ENCODE measurements at regions of chr3 and their contacts with region 1.

Region 1: DNA sequence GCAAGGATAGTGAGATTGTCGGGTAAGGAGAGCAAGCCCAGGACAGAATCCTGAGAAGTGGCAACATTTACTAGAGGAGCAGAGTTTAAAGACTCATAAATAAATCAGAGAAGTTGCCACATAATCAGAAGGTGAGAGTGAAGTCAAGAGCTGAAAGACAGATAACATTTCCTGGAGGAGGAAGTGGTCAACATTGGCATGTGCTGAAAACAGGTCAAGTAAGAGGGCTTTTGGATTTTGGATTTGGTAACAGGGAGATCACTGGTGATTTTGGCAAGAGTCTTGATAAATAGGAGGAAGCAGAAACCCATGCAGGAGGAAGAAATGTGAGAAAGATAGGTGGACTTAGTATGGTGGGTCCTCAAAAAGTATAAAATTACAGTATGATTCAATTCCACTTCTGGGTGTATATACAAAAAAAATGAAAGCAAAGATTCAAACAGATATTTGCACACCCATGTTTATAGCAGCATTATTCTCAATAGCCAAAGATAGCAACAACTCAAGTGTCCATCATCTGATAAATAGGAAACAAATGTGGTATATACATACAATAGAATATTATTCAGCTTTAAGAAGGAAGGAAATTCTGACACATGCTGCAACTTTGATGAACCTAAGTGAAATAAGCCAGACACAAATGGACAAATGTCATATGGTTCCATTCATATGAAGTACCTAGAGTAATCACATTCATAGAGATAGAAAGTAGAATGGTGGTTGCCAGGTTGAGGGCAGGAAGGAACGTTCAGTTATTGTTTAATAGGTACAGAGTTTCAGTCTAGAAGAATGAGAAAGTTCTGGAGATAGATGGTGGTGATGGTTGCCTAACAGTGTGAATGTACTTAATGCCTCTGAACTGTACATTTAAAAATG is 27.3 kb upstream of the MBNL1 start:
- DNase-seq: no peak
- ATAC-seq: peak; percentile 12
- H3K4me3 Mint-ChIP-seq: peak overlapping the region; percentile 97
- H3K27ac Mint-ChIP-seq: peak overlapping the region; percentile 88
- H3K4me1 Mint-ChIP-seq: peaks cover 51% of the 10 kb centered on the region
- H3K27me3 Mint-ChIP-seq: no peaks in the 10 kb centered on the region

Region 2: DNA sequence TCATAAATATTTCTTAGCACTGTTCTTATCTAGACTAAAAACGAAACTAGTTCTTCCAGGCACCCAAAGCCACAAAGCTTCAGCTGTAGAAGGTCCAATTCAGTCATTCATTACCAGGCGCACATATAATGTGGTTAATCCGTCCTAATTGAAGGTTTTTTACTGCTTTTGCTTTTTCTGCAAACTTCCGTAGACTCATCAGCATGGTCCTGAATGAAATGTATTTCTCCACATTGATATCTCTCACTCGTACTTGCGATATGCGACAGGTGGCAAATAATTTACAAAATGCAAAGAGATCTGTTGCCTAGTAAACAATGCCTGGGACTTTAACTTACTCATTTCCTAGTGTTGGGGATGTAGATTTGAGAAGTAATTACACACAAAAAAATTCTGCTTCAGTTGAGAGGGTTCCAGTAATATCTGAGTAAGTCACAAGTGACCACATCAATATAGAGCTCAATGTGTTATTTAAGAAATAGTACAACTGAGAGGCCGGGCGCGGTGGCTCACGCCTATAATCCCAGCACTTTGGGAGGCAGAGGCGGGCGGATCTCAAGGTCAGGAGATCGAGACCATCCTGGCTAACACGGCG is 47.6 kb before region 1 on chr3:
- POLR2A ChIA-PET with region 1: interaction called, 126 read pairs
- DNase-seq: no peak
- ATAC-seq: peak; percentile 64
- H3K4me3 Mint-ChIP-seq: peak overlapping the region; percentile 86
- H3K27ac Mint-ChIP-seq: peak overlapping the region; percentile 87
- H3K4me1 Mint-ChIP-seq: peaks cover 67% of the 10 kb centered on the region
- H3K27me3 Mint-ChIP-seq: no peaks in the 10 kb centered on the region

Region 3: DNA sequence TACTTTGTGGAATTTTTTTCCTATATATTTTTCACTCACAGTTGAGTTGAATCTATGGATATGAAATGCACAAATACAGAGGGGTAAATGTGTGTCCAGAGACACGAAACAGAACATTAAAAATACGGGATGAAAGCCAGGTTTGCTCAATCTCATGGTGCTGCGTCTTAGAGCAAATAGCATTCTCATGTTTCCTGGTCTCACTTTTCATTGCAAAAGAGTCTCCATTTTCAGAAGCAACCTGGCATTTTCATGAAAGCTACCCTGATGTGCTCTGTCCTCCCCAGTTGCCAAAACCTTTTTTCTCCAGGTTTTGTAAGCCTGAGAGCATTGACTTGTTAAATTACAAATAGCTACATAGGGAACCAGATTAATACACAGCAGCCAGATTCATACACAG is 22.2 kb before region 1 on chr3:
- POLR2A ChIA-PET with region 1: interaction called, 16 read pairs
- DNase-seq: no peak
- ATAC-seq: no peak
- H3K4me3 Mint-ChIP-seq: peak overlapping the region; percentile 83
- H3K27ac Mint-ChIP-seq: peak overlapping the region; percentile 15
- H3K4me1 Mint-ChIP-seq: peaks cover 55% of the 10 kb centered on the region
- H3K27me3 Mint-ChIP-seq: no peaks in the 10 kb centered on the region

Region 4: DNA sequence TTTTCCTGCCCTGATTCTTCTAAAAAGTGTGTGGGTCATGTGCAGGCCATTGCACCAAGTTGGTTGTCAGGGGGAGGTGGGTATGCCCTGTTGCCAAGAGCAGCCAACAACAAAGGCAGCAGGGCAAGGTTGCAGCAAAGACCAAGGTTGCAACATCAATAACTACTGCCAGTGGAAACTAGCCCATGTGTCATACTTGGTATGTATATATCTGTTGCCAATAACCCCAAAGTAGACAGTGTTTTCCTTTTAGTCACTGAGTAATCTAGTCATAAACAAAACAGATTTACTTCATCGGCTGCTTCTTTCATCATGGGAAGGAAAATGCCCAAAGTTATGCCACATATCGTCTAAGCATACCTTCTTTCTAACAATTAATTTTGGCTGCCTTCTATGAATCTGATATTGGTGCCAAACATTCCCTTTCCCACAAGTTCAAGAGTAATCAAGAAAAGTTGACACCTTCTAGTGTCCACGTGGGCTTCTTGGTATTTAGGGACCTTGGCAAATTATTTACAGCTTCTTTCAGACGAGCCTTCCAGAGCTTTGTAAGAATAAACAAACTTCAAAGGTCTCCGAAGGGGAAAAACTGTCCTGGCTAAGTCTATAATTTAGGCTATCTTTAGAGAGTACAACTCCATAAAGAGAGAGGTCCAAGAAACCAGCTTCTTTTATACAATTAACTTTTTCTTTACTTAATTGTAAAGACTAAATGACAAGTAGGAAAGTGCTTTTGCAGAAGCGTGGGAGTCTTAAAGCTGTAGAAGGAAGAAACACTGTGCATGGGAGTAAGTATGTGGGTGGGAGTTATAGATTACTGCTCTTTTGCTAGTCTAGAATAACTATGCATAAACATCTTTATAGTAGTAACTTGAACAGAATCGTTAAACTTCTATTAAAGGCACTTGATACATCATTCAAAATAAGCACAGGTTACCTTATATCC is 17.3 kb after region 1 on chr3:
- POLR2A ChIA-PET with region 1: interaction called, 46 read pairs
- DNase-seq: no peak
- ATAC-seq: peak; percentile 50
- H3K4me3 Mint-ChIP-seq: peak overlapping the region; percentile 79
- H3K27ac Mint-ChIP-seq: peak overlapping the region; percentile 91
- H3K4me1 Mint-ChIP-seq: peaks cover 74% of the 10 kb centered on the region
- H3K27me3 Mint-ChIP-seq: no peaks in the 10 kb centered on the region

Region 5: DNA sequence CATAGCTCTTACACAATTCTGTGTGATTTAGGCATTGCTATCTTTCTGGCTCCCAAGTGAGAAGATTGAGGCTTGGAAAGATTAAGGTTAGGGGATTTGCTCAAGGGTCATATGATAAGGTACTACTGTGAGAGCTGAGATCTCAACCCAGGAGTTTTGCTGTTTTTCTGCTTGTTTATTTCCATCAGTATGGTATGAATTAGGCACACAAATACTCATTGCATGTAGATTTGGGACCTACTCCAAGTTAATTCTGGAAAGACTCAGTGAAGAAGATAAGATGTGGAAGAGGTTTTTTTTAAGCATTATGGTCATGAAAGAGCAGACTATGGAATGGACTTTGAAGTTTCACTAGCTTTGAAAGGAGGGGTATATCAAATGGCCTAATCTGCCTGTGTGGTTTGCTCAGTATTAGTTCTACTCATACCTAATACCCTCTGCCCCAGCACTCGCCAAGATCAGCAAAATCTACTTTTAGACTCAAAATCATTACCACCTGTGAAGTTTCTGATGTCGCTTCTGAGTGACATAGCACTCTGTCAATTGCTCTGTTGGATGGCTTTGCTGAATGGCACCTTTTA is 39.8 kb after region 1 on chr3:
- POLR2A ChIA-PET with region 1: interaction called, 258 read pairs
- DNase-seq: no peak
- ATAC-seq: no peak
- H3K4me3 Mint-ChIP-seq: peak overlapping the region; percentile 72
- H3K27ac Mint-ChIP-seq: peak overlapping the region; percentile 57
- H3K4me1 Mint-ChIP-seq: peaks cover 70% of the 10 kb centered on the region
- H3K27me3 Mint-ChIP-seq: no peaks in the 10 kb centered on the region

Region 6: GRCh38 chr3:152330559-152330958 is 89.2 kb after region 1 on chr3:
- POLR2A ChIA-PET with region 1: no interaction called
- DNase-seq: no peak
- ATAC-seq: no peak
- H3K4me3 Mint-ChIP-seq: no peak overlapping the region
- H3K27ac Mint-ChIP-seq: no peak overlapping the region
- H3K4me1 Mint-ChIP-seq: peaks cover 56% of the 10 kb centered on the region
- H3K27me3 Mint-ChIP-seq: no peaks in the 10 kb centered on the region

Region 7: DNA sequence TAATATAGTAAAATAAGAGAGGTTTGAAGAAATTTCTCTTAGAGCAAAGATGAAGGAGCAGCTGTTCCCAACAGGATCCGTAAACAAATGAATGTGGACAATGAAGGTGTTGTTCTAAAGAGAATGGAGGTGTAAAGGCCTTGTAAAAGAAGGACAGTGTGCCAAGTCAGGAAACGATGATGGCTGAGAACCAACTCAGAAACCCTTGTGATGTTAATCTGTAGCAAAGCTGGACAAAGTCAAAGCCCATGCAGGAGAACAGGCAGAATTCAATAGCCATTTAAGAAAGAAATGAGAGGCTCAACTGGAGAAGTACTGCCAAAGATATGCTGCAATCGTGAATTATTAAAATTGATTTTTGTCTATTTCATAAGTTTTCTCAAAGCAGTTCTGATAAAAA is 219.6 kb after region 1 on chr3:
- POLR2A ChIA-PET with region 1: no interaction called
- DNase-seq: no peak
- ATAC-seq: no peak
- H3K4me3 Mint-ChIP-seq: no peak overlapping the region
- H3K27ac Mint-ChIP-seq: peak overlapping the region; percentile 40
- H3K4me1 Mint-ChIP-seq: peaks cover 19% of the 10 kb centered on the region
- H3K27me3 Mint-ChIP-seq: no peaks in the 10 kb centered on the region

Region 8: DNA sequence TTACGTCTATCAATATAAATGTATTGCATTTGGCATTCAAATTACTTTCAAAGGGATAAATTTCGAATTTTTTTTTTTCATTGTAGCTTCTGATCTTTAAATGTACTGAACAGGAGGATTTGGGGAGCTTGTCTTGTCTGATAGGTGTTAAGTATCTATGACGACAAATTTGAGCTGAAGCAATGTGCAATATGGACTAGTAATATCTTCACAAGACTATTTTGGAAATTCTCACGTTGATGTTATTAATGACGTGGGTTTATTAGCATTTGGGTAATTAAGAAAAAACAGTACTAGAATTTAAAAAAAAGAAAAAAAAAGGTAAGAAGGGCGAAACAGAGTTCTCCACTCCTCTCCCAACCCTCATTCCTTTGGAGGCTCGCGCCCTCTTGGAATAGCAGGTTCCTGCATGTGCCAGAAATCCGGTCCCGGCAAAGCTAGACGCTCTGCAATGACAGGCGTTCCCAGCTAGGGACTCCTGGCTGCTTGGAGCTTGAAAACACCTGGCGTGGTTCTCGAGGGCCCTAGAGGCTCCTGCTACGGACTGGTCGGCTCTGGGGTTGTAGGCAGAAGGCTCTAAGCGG is 592.9 kb after region 1 on chr3:
- POLR2A ChIA-PET with region 1: no interaction called
- DNase-seq: no peak
- ATAC-seq: no peak
- H3K4me3 Mint-ChIP-seq: peak overlapping the region; percentile 86
- H3K27ac Mint-ChIP-seq: peak overlapping the region; percentile 60
- H3K4me1 Mint-ChIP-seq: peaks cover 11% of the 10 kb centered on the region
- H3K27me3 Mint-ChIP-seq: peaks cover 60% of the 10 kb centered on the region